Motor neuron (in vitro differentiated cells): ENCODE measurements at regions of chr2 and their contacts with region 1.

Region 1: GRCh38 chr2:174577967-174578589 is 19.5 kb downstream of the WIPF1 start:
- ATAC-seq: peak in 3 of 8 experiments; percentile 69 to 90 (median 75)
- H3K4me3 ChIP-seq: no peak overlapping the region
- H3K27ac ChIP-seq: no peak overlapping the region
- H3K4me1 ChIP-seq: no peaks in the 10 kb centered on the region

Region 2: GRCh38 chr2:174465327-174465726 is 112.8 kb before region 1 on chr2:
- in situ Hi-C with region 1: no loop called
- ATAC-seq: peak in 3 of 8 experiments; percentile 19 to 64 (median 21)
- H3K4me3 ChIP-seq: no peak overlapping the region
- H3K27ac ChIP-seq: no peak overlapping the region
- H3K4me1 ChIP-seq: peaks cover 0 to 2% of the 10 kb centered on the region in 2 donors

Region 3: DNA sequence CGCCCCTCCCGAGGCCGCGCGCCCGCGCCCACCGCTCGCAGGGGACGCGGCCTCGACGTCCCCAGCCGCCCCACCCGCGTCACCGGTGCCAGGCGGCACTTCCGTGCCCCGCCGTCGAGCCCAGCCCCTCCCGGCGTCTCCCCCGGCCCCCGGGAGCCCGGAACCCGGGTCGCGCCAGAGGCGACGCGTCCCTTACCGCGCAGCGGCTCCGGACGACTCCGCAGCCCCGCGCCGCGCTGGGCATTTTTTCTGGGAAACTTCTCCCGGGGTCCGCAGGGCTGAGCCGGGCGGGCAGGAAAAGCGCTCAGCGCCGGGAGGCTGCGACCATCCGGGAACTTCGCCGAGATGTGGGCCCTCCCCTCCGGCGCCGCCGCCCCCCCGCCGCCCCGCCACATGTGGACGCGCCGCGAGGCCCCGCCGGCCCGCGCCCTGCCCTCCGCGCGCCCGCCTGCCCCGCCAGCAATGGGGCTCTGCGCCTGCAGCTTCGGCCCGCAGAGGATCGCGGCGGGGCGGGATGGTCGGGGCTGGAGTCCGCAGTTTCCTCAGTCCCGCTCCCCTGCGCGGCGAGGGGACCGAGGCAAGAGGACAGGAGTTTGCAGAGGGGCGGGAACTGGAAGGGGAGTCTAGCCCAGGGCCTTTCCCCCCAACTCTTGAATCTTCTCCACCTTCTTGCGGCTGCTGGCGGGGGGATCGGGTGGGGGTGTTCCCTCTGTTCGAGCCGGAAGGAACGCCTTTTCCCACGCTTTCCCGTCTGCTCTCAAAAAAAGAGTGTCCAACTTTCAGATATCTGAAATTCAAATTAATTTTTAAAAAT is 104.7 kb after region 1 on chr2:
- in situ Hi-C with region 1: loop called in 3 of 9 experiments (anchors 10 to 25 kb)
- ATAC-seq: peak; percentile 67 to 83 (median 76)
- H3K4me3 ChIP-seq: peak overlapping the region; percentile 68 to 91 (median 82)
- H3K27ac ChIP-seq: peak overlapping the region in 1 of 2 donors; percentile 13
- H3K4me1 ChIP-seq: peaks cover 2 to 6% of the 10 kb centered on the region in 2 donors